ENCODE measurements at regions of chr2 and their contacts with region 1.

Region 1: GRCh38 chr2:133641497-133641896 is 73.2 kb upstream of the NCKAP5 start:
- DNase-seq: peak; percentile 99
- H3K4me3 ChIP-seq: peak overlapping the region; percentile 41 to 50 (median 44)
- H3K27ac ChIP-seq: peak overlapping the region; percentile 59
- H3K4me1 ChIP-seq: peaks cover 26% of the 10 kb centered on the region
- H3K27me3 ChIP-seq: no peaks in the 10 kb centered on the region
- CTCF ChIP-seq: peak; percentile 68 to 83

Region 2: DNA sequence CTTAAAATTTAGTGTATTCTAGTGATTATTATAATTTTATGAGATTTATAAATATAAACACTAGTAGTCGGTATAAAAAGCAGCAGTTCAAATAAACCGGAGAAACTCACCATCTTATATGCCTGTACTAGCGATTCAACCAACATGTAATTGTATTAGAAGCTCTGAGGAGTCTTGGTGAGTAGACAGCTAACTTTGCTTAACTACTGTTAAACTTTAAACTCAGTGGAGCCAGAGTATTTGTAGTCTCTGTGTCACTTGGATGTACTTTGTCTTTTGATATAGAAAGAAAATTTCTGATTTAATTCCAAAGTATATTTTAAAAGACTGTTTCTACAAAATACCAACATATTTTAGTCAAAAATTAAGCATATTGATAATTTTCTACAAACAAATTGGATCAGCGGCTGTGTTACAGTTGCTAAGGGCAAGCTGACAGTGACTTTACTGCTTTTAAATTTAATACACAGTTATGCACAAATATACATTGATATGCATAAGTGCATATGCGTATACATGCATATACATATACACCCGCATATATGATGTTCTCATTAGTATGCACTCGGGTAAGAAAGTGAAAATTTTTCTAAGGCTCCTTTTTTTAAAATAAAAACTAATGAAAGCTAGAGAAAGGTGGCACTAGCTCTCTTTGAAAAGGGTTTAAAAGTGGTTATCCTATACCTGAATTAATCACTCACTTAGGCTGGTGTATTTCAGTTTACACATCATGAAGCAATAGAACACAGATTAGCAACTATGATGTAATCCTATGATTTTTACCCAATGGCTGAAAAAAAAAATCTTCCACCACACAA is 447.7 kb before region 1 on chr2:
- CTCF ChIA-PET with region 1: no interaction called
- dilution Hi-C with region 1: no loop called
- in situ Hi-C with region 1: no loop called
- intact Hi-C with region 1: loop called (anchors 5 kb)
- DNase-seq: peak; percentile 12
- H3K4me3 ChIP-seq: no peak overlapping the region
- H3K27ac ChIP-seq: no peak overlapping the region
- H3K4me1 ChIP-seq: peaks cover 11% of the 10 kb centered on the region
- H3K27me3 ChIP-seq: no peaks in the 10 kb centered on the region
- CTCF ChIP-seq: no peak

Region 3: GRCh38 chr2:133247631-133248030 is 393.9 kb before region 1 on chr2:
- CTCF ChIA-PET with region 1: no interaction called
- dilution Hi-C with region 1: no loop called
- in situ Hi-C with region 1: no loop called
- intact Hi-C with region 1: no loop called
- DNase-seq: no peak
- H3K4me3 ChIP-seq: no peak overlapping the region
- H3K27ac ChIP-seq: no peak overlapping the region
- H3K4me1 ChIP-seq: no peaks in the 10 kb centered on the region
- H3K27me3 ChIP-seq: no peaks in the 10 kb centered on the region
- CTCF ChIP-seq: no peak

Region 4: DNA sequence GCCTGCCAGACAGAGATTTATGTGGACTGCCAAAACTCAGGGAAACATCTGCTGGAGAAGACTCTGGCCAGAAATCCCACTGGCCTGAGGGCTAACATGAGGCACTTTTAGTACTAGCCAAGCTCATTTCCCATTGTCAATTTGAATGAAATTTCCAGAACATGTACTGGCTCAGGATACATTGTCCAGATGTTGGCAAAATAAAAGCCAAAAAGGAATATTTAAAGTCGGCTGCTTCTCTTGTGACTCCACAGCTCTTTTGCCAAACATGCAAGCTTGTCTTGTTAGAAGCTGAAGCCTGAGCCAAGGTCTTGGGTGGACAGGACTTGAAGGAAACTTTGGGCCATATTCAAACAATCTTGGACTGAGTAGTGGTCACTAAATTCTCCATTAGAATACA is 288.8 kb before region 1 on chr2:
- CTCF ChIA-PET with region 1: no interaction called
- dilution Hi-C with region 1: no loop called
- in situ Hi-C with region 1: no loop called
- intact Hi-C with region 1: loop called (anchors 10 kb)
- DNase-seq: no peak
- H3K4me3 ChIP-seq: no peak overlapping the region
- H3K27ac ChIP-seq: no peak overlapping the region
- H3K4me1 ChIP-seq: no peaks in the 10 kb centered on the region
- H3K27me3 ChIP-seq: no peaks in the 10 kb centered on the region
- CTCF ChIP-seq: no peak

Region 5: DNA sequence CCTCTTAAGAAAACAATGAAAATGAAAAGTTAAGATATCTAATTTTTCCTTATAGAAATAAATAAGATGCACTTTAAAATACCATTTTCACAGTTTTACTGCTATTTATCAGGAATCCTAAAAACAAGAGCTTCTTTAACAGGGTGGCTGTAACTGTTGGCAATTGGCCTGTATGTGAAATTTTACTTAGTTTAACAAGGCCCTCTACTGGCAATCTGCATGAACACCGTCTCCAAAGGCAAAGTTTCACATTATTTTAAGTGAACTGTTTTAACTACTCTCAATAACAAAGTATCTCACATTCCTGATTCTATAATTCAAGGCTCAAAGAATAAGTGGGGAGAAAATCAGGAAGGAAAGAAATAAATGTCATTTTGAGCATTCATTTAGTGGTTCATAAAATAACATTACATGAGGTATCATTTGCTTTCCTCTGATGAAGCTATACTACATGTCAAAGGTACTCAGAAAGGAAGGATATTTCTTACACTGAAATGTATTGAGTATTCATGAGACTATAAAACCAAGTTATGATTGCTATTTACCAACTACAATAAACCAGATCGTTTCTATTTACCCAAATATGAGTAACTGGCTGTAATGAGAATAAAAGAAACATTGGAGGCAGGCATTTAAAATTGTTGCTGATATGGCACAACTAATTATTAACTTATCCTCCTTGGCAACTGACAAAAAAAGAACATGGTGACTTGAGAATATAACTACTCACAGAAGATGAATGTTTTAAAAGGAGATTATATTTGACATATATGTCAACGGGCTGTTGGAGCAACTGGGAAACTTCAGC is 80.2 kb before region 1 on chr2:
- CTCF ChIA-PET with region 1: no interaction called
- dilution Hi-C with region 1: no loop called
- in situ Hi-C with region 1: loop called in 1 of 2 experiments (anchors 10 kb)
- intact Hi-C with region 1: loop called (anchors 1 kb)
- DNase-seq: peak; percentile 41
- H3K4me3 ChIP-seq: no peak overlapping the region
- H3K27ac ChIP-seq: no peak overlapping the region
- H3K4me1 ChIP-seq: no peaks in the 10 kb centered on the region
- H3K27me3 ChIP-seq: no peaks in the 10 kb centered on the region
- CTCF ChIP-seq: peak; percentile 58 to 70

Region 6: GRCh38 chr2:133586978-133587377 is 54.5 kb before region 1 on chr2:
- CTCF ChIA-PET with region 1: no interaction called
- dilution Hi-C with region 1: no loop called
- in situ Hi-C with region 1: no loop called
- intact Hi-C with region 1: loop called (anchors 2 kb)
- DNase-seq: peak; percentile 77
- H3K4me3 ChIP-seq: no peak overlapping the region
- H3K27ac ChIP-seq: no peak overlapping the region
- H3K4me1 ChIP-seq: peaks cover 19% of the 10 kb centered on the region
- H3K27me3 ChIP-seq: no peaks in the 10 kb centered on the region
- CTCF ChIP-seq: no peak

Region 7: DNA sequence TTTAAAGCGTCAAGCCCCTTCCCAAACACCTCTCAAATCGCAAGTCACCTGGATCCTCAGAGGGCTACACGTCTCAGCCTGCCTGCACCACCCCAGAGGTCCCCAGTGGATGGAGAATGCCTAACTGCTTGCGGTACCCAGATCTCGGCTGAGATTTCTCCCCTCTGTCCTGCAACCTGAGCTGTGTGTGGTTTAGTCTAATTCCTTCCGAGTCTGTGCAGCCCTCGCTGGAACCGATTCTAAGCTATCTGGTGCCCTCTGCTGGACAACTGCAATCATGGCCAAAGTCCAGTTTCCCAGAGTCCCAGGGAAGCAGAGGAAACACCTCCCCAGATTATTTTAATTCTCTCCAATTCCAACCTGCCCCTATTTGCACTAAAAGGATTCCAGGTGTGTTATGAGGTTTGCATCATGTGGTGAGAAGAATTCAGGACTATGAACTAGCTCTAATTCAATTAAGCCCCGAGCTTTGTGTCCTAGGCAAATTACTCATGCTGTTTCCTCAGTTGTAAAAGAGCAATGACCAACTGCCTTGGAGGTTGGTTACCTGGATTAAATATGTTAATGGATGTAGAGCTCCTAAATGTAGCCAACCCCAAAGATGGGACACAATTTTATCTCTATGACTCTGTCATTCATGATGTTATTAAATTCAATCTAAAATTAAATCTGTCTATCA is 202.9 kb after region 1 on chr2:
- CTCF ChIA-PET with region 1: interaction called, 4 read pairs
- dilution Hi-C with region 1: no loop called
- in situ Hi-C with region 1: no loop called
- intact Hi-C with region 1: loop called (anchors 2 kb)
- DNase-seq: peak; percentile 73
- H3K4me3 ChIP-seq: no peak overlapping the region
- H3K27ac ChIP-seq: no peak overlapping the region
- H3K4me1 ChIP-seq: peaks cover 15% of the 10 kb centered on the region
- H3K27me3 ChIP-seq: no peaks in the 10 kb centered on the region
- CTCF ChIP-seq: peak; percentile 85 to 92